ENCODE measurements at regions of chr2 and their contacts with region 1.

Region 1: GRCh38 chr2:50546790-50547189 is 485.1 kb downstream of the NRXN1 start:
- DNase-seq: no peak
- H3K4me3 ChIP-seq: no peak overlapping the region
- H3K27ac ChIP-seq: no peak overlapping the region
- H3K4me1 ChIP-seq: no peaks in the 10 kb centered on the region
- H3K27me3 ChIP-seq: no peaks in the 10 kb centered on the region
- CTCF ChIP-seq: no peak
- EP300 ChIP-seq: no peak
- POLR2A ChIP-seq: no peak
- RAD21 ChIP-seq: no peak

Region 2: DNA sequence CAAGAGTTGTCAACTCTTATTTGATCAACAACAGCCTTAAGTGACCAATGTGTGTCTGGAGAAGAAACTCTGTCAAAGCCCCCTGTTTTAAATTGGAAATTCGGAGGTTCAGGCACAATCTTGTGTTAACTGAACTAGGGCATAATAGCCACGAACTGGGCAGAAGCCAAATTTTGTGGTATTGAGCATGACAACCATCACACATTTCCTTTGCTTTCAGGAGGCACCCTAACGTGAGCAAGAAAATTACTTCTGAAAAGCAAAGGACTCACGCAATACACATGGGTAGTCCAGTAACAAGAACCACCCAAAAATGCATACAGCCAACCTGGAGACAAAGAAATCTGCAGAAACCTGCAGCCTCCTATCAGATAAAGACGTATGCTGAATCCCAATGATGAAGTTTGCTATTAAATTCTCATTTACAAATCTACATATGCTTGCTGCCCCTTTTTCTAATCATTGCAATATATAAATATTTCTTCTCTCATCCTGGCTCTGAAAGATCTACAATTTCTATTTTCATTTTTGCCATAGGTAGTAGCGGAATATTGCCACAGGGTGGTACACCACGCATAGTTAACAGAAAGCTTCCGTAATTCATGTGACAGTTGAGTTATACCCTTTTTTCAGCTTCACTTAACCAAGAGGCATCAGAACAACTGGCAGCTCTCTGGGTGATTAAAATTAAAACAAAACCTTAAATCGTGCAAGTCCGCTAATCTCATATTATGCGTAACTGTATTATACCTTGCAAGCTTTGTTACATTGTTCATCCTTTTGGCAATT is 10.6 kb before region 1 on chr2:
- CTCF ChIA-PET with region 1: interaction called, 10 read pairs
- POLR2A ChIA-PET with region 1: no interaction called
- DNase-seq: no peak
- H3K4me3 ChIP-seq: no peak overlapping the region
- H3K27ac ChIP-seq: no peak overlapping the region
- H3K4me1 ChIP-seq: no peaks in the 10 kb centered on the region
- H3K27me3 ChIP-seq: no peaks in the 10 kb centered on the region
- CTCF ChIP-seq: peak in 2 of 3 experiments; percentile 45 to 55; a peak in 2 of 4 replicates
- EP300 ChIP-seq: no peak
- POLR2A ChIP-seq: no peak
- RAD21 ChIP-seq: peak; percentile 84 to 85